Caco-2 (cell line): ENCODE measurements at regions of chr5 and their contacts with region 1.

Region 1: GRCh38 chr5:103511554-103511885 is 51.1 kb downstream of the NUDT12 start:
- DNase-seq: peak in 1 of 2 experiments; percentile 2
- H3K4me3 ChIP-seq: no peak overlapping the region
- H3K4me3 Mint-ChIP-seq: peak overlapping the region; percentile 1
- H3K27ac Mint-ChIP-seq: peak overlapping the region; percentile 56
- H3K4me1 ChIP-seq: peaks cover 23% of the 10 kb centered on the region
- H3K4me1 Mint-ChIP-seq: peaks cover 13% of the 10 kb centered on the region
- H3K27me3 ChIP-seq: no peaks in the 10 kb centered on the region
- H3K27me3 Mint-ChIP-seq: no peaks in the 10 kb centered on the region
- CTCF ChIP-seq: no peak

Region 2: DNA sequence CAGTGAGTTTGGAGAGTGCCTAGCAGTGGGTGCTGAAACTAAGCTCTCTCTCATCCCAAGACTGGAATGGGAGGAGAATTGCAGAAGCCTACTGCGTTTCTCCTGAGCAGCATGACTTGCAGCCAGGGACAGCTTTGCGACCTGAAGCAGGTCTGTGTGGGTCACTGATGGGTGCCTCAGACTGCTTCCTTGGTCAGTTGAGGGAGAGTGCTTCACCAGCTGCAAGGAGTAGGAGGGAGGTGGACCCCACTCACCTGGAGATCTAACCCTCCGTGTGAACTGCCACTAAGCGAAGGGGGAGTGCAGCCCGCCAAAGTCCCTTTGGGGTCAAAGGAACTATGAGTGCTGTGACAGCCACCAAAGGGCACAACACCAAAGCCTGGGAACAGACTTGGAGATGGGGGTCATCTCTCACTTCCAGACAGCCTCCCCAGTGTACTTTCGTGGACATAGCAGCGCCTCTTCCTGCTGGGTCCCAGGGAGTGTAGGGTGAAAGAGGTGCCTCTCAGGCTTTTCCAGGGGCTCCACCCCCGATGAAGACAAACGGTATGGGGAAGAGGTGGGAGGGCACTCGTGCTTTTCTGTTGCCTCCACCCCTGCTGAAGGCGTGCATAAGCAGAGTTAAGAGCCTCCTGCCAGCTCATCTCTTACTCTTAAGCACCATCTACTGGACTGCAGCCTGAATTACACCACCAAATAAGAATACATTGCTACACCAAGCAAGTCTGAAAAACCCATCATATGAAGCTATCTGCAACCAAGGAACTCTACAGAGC is 287.2 kb before region 1 on chr5:
- CTCF ChIA-PET with region 1: no interaction called
- POLR2A ChIA-PET with region 1: no interaction called
- intact Hi-C with region 1: no loop called
- DNase-seq: peak; percentile 60 to 67
- H3K4me3 ChIP-seq: no peak overlapping the region
- H3K4me3 Mint-ChIP-seq: peak overlapping the region; percentile 37
- H3K27ac Mint-ChIP-seq: no peak overlapping the region
- H3K4me1 ChIP-seq: no peaks in the 10 kb centered on the region
- H3K4me1 Mint-ChIP-seq: no peaks in the 10 kb centered on the region
- H3K27me3 ChIP-seq: no peaks in the 10 kb centered on the region
- H3K27me3 Mint-ChIP-seq: no peaks in the 10 kb centered on the region
- CTCF ChIP-seq: peak; percentile 69 to 79

Region 3: DNA sequence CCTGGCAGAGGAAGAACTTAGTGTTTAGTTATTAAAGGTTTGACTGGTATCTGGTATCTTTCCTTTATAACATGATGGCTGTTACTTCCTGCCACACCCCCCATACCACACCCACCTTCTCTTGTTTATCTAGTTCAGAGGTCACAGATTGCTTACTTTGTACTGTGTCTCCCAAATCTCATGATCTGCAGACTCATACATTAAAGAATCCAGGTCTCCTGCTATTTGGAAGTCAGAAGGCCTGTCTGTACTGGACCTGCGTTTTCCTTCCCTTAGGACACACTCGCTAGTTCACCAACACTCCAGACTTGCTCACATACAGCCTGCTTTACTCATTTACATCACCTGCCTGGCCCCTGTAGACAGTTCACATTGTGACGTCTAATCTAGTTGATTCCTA is 11.8 kb after region 1 on chr5:
- CTCF ChIA-PET with region 1: interaction called, 3 read pairs
- POLR2A ChIA-PET with region 1: no interaction called
- intact Hi-C with region 1: loop called (anchors 1 kb)
- DNase-seq: peak; percentile 42 to 58
- H3K4me3 ChIP-seq: no peak overlapping the region
- H3K4me3 Mint-ChIP-seq: peak overlapping the region; percentile 42
- H3K27ac Mint-ChIP-seq: peak overlapping the region; percentile 87
- H3K4me1 ChIP-seq: peaks cover 13% of the 10 kb centered on the region
- H3K4me1 Mint-ChIP-seq: peaks cover 8% of the 10 kb centered on the region
- H3K27me3 ChIP-seq: no peaks in the 10 kb centered on the region
- H3K27me3 Mint-ChIP-seq: no peaks in the 10 kb centered on the region
- CTCF ChIP-seq: no peak

Region 4: DNA sequence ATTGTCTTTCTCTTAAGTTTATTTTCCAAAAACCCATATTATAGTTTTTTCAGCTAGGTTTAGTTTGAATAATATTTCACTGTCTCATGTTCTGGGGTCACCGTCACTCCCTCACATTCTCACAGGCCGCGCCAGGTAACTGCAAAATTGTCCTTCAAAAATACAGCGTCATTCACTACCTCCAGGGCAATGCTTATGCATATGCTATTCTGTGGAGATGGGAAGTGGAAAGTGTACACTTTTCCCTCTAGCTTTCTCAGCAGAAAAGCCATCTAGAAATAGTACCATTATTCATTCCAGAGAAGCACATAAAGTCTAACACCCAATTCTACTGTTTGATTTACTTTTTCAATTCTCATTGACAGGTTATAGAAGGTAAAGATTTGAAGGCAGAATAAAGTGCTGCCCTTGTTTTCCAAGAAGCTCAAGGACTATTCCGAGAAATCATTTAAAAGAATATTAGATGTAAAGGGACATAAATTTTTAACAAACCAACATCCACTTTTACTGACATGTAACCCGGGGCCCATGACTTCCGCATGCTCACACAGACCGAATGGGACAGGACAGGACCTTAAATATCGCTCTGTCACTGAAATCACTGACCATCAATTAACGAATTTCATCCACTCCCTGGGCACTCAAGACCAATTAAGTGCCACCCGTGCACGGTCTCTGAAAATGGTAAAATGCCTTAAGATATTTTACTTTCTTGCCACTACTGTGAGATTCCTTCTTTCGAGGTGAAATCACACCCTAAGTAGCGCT is 50.3 kb after region 1 on chr5:
- CTCF ChIA-PET with region 1: no interaction called
- POLR2A ChIA-PET with region 1: no interaction called
- intact Hi-C with region 1: no loop called
- DNase-seq: peak in 1 of 2 experiments; percentile 8
- H3K4me3 ChIP-seq: peak overlapping the region; percentile 69
- H3K4me3 Mint-ChIP-seq: peak overlapping the region; percentile 91
- H3K27ac Mint-ChIP-seq: peak overlapping the region; percentile 79
- H3K4me1 ChIP-seq: peaks cover 4% of the 10 kb centered on the region; the same call in 1 of the 2 replicates
- H3K4me1 Mint-ChIP-seq: peaks cover 7% of the 10 kb centered on the region
- H3K27me3 ChIP-seq: no peaks in the 10 kb centered on the region
- H3K27me3 Mint-ChIP-seq: no peaks in the 10 kb centered on the region
- CTCF ChIP-seq: no peak

Region 5: GRCh38 chr5:103690676-103691075 is 179.2 kb after region 1 on chr5:
- CTCF ChIA-PET with region 1: no interaction called
- POLR2A ChIA-PET with region 1: no interaction called
- intact Hi-C with region 1: no loop called
- DNase-seq: no peak
- H3K4me3 ChIP-seq: no peak overlapping the region
- H3K4me3 Mint-ChIP-seq: no peak overlapping the region
- H3K27ac Mint-ChIP-seq: no peak overlapping the region
- H3K4me1 ChIP-seq: no peaks in the 10 kb centered on the region
- H3K4me1 Mint-ChIP-seq: no peaks in the 10 kb centered on the region
- H3K27me3 ChIP-seq: no peaks in the 10 kb centered on the region
- H3K27me3 Mint-ChIP-seq: no peaks in the 10 kb centered on the region
- CTCF ChIP-seq: no peak